B cell (primary cell): ENCODE measurements at regions of chr3 and their contacts with region 1.

Region 1: DNA sequence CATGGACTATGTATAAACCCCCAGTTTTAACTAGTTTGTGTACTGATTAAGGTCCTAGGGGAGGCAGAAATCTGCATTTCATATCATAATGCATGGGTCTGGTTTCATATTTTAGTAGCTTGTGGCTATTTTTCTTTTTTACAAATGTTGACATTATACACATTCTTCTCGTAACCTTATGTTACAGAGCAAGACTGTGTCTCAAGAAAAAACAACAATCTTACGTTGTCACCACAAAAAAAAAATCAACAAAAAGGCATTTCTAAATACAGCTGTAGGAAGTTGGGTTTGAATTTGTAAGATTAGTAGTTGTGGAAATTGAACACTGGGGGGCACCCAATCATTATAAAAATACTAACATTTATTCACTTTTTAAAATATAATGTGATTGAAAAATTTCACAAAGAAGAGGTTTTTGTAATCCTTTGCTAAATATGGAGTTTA is 17.9 kb downstream of the SERP1 start:
- DNase-seq: peak; percentile 47
- ATAC-seq: no peak
- H3K4me3 ChIP-seq: no peak overlapping the region
- H3K4me3 Mint-ChIP-seq: no peak overlapping the region
- H3K27ac ChIP-seq: no peak overlapping the region
- H3K27ac Mint-ChIP-seq: no peak overlapping the region
- H3K4me1 ChIP-seq: no peaks in the 10 kb centered on the region
- H3K4me1 Mint-ChIP-seq: no peaks in the 10 kb centered on the region
- H3K27me3 ChIP-seq: no peaks in the 10 kb centered on the region
- H3K27me3 Mint-ChIP-seq: peaks cover under 1% of the 10 kb centered on the region
- CTCF ChIP-seq: peak; percentile 70

Region 2: DNA sequence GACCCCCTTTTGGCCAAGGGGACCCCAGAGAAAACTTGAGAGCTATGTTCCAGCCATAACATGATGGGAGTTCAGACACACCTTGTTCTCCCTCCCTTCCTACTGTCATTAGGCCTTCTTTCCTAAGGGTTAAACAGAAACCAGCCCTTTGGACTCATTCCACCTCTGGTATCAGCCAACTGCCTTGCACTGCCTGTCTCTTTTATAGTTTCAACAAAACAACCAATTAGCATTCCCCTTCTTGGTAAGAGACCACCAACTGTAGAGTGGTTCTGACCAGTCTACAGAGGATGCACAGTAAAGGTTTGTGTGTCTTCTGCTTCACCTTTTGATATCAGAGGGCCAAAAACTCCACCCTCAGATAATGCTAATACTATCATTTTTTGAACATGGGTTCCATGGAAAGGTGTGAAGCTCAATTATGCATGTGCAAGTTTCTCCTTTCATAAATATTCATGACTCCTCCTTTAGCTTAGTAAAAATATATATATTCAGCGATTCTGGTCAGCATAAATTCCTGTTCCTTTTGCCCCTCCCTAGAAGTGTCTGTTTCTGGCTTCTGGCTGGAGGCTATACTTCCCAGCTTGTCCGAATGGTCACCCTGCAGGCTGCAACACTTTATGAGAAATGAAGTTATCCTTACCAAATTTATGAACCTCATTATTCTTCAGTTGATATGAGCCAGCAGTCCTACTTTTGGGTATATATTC is 37.9 kb before region 1 on chr3:
- CTCF ChIA-PET with region 1: no interaction called
- POLR2A ChIA-PET with region 1: no interaction called
- intact Hi-C with region 1: no loop called
- DNase-seq: no peak
- ATAC-seq: no peak
- H3K4me3 ChIP-seq: no peak overlapping the region
- H3K4me3 Mint-ChIP-seq: no peak overlapping the region
- H3K27ac ChIP-seq: no peak overlapping the region
- H3K27ac Mint-ChIP-seq: no peak overlapping the region
- H3K4me1 ChIP-seq: no peaks in the 10 kb centered on the region
- H3K4me1 Mint-ChIP-seq: no peaks in the 10 kb centered on the region
- H3K27me3 ChIP-seq: no peaks in the 10 kb centered on the region
- H3K27me3 Mint-ChIP-seq: no peaks in the 10 kb centered on the region
- CTCF ChIP-seq: no peak

Region 3: DNA sequence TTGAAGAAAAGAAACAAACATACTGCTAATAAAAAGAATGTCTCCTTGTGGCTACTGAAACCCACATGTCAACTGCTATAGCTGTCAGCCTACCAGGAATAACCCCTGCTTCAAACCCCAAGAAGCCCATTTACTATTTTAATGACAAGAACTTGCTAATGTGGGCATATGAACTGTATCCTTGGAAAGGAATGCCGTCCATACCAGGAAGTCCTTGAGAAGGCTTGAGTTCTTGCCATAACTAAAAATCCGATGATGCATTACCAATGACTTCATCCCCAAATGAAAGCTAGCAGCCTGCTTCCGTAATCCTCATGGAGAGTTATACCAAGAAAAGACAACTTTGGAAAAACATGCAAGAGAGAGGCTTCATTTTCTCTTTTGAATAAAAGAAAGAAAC is 342.0 kb after region 1 on chr3:
- CTCF ChIA-PET with region 1: interaction called, 15 read pairs
- POLR2A ChIA-PET with region 1: no interaction called
- intact Hi-C with region 1: loop called (anchors 1 kb)
- DNase-seq: no peak
- ATAC-seq: no peak
- H3K4me3 ChIP-seq: no peak overlapping the region
- H3K4me3 Mint-ChIP-seq: no peak overlapping the region
- H3K27ac ChIP-seq: no peak overlapping the region
- H3K27ac Mint-ChIP-seq: no peak overlapping the region
- H3K4me1 ChIP-seq: no peaks in the 10 kb centered on the region
- H3K4me1 Mint-ChIP-seq: peaks cover under 1% of the 10 kb centered on the region
- H3K27me3 ChIP-seq: no peaks in the 10 kb centered on the region
- H3K27me3 Mint-ChIP-seq: peaks cover 17% of the 10 kb centered on the region
- CTCF ChIP-seq: no peak

Region 4: DNA sequence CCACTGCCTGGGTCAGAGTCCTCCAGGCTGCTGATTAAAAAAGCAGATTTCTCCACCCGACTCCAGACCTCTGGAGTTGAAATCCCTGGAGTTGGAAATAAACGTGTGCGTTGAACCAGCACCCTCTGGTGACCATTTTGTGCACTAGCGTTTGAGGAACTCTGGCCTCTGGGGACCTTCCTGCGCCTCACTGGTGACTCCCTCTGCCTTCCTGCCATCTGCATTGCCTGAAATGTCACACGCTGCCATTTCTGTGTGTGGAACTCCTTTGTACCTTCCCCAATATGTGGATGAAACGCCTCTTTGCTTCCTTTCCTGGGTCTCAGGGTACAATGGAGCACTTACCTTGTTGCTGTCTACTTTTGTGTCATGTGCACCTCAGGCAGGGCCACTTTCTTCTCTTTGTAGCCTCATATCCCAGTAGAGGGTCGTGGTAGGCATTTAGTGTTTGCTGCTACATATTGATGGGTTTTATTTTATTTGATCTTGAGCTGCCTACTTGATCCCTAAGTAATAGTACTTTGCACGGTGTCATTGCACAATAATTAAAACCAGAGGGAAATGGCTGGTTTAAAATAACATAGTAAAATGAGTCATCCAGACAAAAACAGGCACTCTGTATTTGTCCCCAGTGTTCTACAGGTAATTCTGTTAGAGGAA is 617.8 kb after region 1 on chr3:
- CTCF ChIA-PET with region 1: interaction called, 4 read pairs
- POLR2A ChIA-PET with region 1: no interaction called
- intact Hi-C with region 1: loop called (anchors 1 kb)
- DNase-seq: peak; percentile 80
- ATAC-seq: peak; percentile 99
- H3K4me3 ChIP-seq: peak overlapping the region in 3 of 5 experiments; percentile 7 to 48 (median 29)
- H3K4me3 Mint-ChIP-seq: no peak overlapping the region
- H3K27ac ChIP-seq: no peak overlapping the region
- H3K27ac Mint-ChIP-seq: no peak overlapping the region
- H3K4me1 ChIP-seq: peaks cover 9 to 17% of the 10 kb centered on the region in 2 donors
- H3K4me1 Mint-ChIP-seq: peaks cover 4% of the 10 kb centered on the region
- H3K27me3 ChIP-seq: peaks cover 0 to 4% (median 0%) of the 10 kb centered on the region in 4 experiments
- H3K27me3 Mint-ChIP-seq: peaks cover 3% of the 10 kb centered on the region
- CTCF ChIP-seq: peak; percentile 86

Region 5: GRCh38 chr3:151203051-151203420 is 674.7 kb after region 1 on chr3 and contains the start of gene GPR171:
- CTCF ChIA-PET with region 1: no interaction called
- POLR2A ChIA-PET with region 1: no interaction called
- intact Hi-C with region 1: no loop called
- DNase-seq: no peak
- ATAC-seq: peak; percentile 17
- H3K4me3 ChIP-seq: no peak within 1 kb of the TSS
- H3K4me3 Mint-ChIP-seq: no peak within 1 kb of the TSS
- H3K27ac ChIP-seq: no peak within 1 kb of the TSS
- H3K27ac Mint-ChIP-seq: no peak within 1 kb of the TSS
- H3K4me1 ChIP-seq: no peaks in the 10 kb centered on the region
- H3K4me1 Mint-ChIP-seq: no peaks in the 10 kb centered on the region
- H3K27me3 ChIP-seq: no peaks in the 10 kb centered on the region
- H3K27me3 Mint-ChIP-seq: peaks cover 4% of the 10 kb centered on the region
- CTCF ChIP-seq: no peak
- total RNA-seq, gene GPR171: 1.1 and 1.6 TPM in 2 replicates